ENCODE measurements at regions of chr10 and their contacts with region 1.

Region 1: GRCh38 chr10:91389636-91390512 is 20.3 kb upstream of the HECTD2 start:
- DNase-seq: peak; percentile 78
- H3K4me3 ChIP-seq: peak overlapping the region; percentile 24
- H3K27ac ChIP-seq: no peak overlapping the region
- H3K4me1 ChIP-seq: peaks cover 3% of the 10 kb centered on the region
- H3K27me3 ChIP-seq: no peaks in the 10 kb centered on the region
- CTCF ChIP-seq: peak; percentile 67

Region 2: GRCh38 chr10:89553064-89553734 is 1836.7 kb before region 1 on chr10:
- CTCF ChIA-PET with region 1: interaction called, 15 read pairs
- POLR2A ChIA-PET with region 1: no interaction called
- intact Hi-C with region 1: no loop called
- DNase-seq: peak; percentile 76
- H3K4me3 ChIP-seq: no peak overlapping the region
- H3K27ac ChIP-seq: no peak overlapping the region
- H3K4me1 ChIP-seq: peaks cover 6% of the 10 kb centered on the region
- H3K27me3 ChIP-seq: no peaks in the 10 kb centered on the region
- CTCF ChIP-seq: no peak

Region 3: DNA sequence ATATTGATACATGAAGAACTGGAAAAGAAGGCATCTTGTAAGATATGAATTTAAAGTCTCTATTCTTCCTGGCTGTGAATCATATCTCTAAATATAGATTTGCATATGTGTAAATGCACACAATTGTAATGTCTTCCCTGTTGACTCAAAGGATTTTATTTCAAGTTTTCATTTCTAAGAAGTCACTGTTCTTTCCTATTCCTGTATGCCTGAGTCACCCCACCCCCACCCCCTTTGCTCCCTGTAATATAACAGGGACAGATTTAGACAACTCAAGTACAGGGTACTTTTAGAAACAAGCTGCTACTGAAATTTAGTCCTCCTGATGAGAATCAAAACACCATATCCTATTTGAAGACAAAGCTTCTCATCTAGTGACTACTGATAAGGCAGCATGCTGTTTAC is 22.7 kb before region 1 on chr10:
- CTCF ChIA-PET with region 1: no interaction called
- POLR2A ChIA-PET with region 1: no interaction called
- intact Hi-C with region 1: no loop called
- DNase-seq: no peak
- H3K4me3 ChIP-seq: no peak overlapping the region
- H3K27ac ChIP-seq: no peak overlapping the region
- H3K4me1 ChIP-seq: no peaks in the 10 kb centered on the region
- H3K27me3 ChIP-seq: no peaks in the 10 kb centered on the region
- CTCF ChIP-seq: no peak

Region 4: DNA sequence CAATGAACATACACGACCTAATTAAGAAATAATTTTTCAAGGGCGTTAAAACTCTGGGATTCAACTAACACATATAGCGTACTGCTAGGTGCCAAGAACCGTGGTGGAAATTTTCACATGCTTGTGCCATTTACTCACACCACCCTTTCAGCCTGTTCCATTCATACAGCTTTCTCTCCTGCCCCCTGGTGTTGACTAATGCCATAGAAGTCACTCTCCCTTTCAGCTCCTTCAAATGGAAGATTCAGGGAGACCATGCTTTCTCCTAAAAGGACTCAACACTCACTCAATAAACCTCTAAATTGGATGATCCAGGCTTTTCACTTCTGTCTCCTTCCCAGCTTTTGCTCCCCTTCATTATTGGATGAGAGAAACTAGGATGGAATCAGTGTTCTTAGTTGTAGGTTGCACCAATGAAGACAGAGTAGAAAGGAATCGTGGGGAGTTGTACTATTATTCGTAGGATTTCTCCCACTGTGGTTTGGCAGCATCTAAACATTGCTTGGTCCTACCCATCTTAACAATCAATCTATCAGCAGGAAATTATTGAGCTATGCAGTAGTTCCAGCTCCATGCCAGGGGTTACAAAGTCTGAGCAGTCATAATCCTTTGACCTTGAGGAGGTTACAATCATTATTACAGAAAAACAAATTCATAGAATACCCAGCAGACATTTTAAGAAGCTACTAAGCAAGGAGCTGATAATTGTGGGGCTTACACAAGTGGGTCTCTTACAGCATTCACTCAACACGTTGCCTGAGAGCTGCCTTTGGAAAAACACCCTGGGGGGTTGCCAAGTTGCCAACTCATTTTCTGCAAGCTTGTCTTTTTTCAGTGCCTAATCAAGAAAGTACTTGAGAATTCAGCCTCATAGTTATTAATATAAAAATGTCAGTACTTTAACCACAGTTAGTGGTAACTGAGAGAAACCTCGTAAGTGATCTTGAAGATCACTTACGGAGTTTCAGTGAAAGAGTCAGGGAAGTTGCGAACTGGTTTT is 245.8 kb after region 1 on chr10:
- CTCF ChIA-PET with region 1: no interaction called
- POLR2A ChIA-PET with region 1: no interaction called
- intact Hi-C with region 1: loop called (anchors 5 kb)
- DNase-seq: peak; percentile 88
- H3K4me3 ChIP-seq: no peak overlapping the region
- H3K27ac ChIP-seq: no peak overlapping the region
- H3K4me1 ChIP-seq: peaks cover 7% of the 10 kb centered on the region
- H3K27me3 ChIP-seq: no peaks in the 10 kb centered on the region
- CTCF ChIP-seq: peak; percentile 83

Region 5: GRCh38 chr10:92200564-92200963 is 810.7 kb after region 1 on chr10:
- CTCF ChIA-PET with region 1: no interaction called
- POLR2A ChIA-PET with region 1: no interaction called
- intact Hi-C with region 1: no loop called
- DNase-seq: no peak
- H3K4me3 ChIP-seq: no peak overlapping the region
- H3K27ac ChIP-seq: no peak overlapping the region
- H3K4me1 ChIP-seq: no peaks in the 10 kb centered on the region
- H3K27me3 ChIP-seq: no peaks in the 10 kb centered on the region
- CTCF ChIP-seq: no peak

Region 6: GRCh38 chr10:92434385-92434784 is 1044.5 kb after region 1 on chr10:
- CTCF ChIA-PET with region 1: no interaction called
- POLR2A ChIA-PET with region 1: no interaction called
- intact Hi-C with region 1: no loop called
- DNase-seq: no peak
- H3K4me3 ChIP-seq: no peak overlapping the region
- H3K27ac ChIP-seq: no peak overlapping the region
- H3K4me1 ChIP-seq: no peaks in the 10 kb centered on the region
- H3K27me3 ChIP-seq: no peaks in the 10 kb centered on the region
- CTCF ChIP-seq: no peak

Measured in A673 (cell line).